Heart right ventricle (tissue), 16 donors: ENCODE measurements at regions of chr11 and their contacts with region 1.

Region 1: DNA sequence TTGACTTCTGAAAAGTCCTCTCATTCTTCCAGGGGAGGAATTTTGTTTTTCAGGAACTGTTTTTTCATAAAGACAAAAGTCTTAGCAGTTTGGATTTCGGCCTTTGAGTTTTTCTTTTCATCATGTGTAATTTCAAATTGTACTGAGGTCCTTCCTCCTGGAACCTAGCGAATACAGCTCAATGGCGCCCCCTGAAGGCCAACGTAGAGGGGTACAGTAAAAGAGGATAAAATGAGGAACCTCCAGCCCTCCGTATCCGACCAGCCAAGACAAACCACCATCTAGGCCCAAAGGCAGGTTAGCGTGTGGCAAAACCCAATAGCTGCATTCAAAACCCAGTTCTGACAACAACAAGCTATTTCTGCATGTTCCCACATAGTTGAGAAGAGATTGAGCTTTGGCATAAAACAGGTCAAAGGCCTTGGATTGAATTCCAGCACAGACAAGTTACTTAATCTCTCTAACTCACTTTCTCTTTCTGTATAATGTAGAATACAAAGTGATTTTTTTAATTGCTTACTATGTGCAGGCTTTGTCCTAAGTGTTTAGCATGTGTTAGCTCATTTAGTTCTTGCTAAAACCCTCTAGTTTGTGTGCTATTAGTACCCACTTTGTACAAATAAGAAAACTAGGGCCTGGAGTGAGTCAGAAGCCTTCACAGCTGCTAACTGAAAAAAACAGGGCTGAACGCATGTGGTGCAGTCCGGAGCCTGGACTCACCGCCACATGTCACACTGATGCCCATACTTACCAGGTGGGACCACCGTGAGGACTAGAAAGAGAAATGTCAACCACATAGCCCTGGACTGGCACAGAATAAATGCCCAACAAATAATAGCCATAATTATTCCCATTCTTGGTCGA is 43.2 kb upstream of the ETS1 start:
- DNase-seq: peak; percentile 91
- ATAC-seq: peak; percentile 84 to 93 (median 90)
- H3K4me3 ChIP-seq: peak overlapping the region in 1 of 10 donors; percentile 15
- H3K27ac ChIP-seq: peak overlapping the region in 4 of 10 donors; percentile 26 to 82 (median 44)
- H3K4me1 ChIP-seq: peaks cover 0 to 51% (median 15%) of the 10 kb centered on the region in 9 donors
- H3K27me3 ChIP-seq: no peaks in the 10 kb centered on the region
- CTCF ChIP-seq: peak; percentile 76 to 94 (median 89)

Region 2: DNA sequence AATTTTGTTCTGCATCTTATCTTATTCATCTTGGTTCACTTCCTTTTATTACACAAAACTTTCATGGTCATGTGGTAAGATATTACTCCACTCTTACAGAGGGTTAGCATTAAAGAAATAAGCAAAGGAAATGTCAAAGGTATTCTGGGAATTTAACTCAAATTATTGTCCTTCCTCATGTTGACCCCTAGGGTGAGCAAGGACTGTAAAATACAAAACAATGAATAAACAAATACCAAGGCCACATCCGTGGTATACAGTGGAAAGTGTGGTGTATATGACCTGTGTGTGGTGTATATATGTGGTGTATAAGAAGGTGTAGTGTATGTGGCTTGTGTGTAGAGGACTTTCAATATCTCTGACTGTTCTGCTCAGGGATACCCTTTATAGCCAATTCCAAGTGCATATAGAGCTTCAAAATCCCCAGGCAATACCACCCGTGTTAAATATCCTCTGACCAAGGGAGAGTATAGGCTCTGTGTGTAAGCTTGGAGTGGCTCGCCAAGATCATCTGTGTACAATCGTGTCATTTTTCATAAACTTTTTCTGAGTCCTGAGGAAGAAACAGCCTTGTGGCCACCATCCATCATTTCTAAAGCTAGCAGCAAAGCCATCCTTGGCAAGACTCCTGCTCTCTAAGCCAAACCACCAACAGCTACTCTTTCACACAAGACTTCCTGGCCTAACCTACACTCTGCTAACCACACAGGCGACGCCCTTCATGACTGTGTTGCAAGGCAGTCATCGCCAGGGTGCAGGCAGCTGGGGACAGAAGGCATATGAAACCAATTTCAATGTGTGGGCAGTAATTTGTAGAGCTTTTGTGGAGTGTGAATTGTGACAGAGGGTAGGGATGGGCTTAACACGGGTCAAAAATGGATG is 591.2 kb before region 1 on chr11:
- intact Hi-C with region 1: loop called in 1 of 10 experiments (anchors 5 kb)
- DNase-seq: peak; percentile 4 to 21
- ATAC-seq: peak in 7 of 8 donors; percentile 33 to 79 (median 58)
- H3K4me3 ChIP-seq: no peak overlapping the region
- H3K27ac ChIP-seq: peak overlapping the region in 1 of 10 donors; percentile 78
- H3K4me1 ChIP-seq: peaks cover 0 to 36% (median 0%) of the 10 kb centered on the region in 9 donors
- H3K27me3 ChIP-seq: peaks cover 0 to 11% (median 0%) of the 10 kb centered on the region in 7 donors
- CTCF ChIP-seq: no peak

Region 3: DNA sequence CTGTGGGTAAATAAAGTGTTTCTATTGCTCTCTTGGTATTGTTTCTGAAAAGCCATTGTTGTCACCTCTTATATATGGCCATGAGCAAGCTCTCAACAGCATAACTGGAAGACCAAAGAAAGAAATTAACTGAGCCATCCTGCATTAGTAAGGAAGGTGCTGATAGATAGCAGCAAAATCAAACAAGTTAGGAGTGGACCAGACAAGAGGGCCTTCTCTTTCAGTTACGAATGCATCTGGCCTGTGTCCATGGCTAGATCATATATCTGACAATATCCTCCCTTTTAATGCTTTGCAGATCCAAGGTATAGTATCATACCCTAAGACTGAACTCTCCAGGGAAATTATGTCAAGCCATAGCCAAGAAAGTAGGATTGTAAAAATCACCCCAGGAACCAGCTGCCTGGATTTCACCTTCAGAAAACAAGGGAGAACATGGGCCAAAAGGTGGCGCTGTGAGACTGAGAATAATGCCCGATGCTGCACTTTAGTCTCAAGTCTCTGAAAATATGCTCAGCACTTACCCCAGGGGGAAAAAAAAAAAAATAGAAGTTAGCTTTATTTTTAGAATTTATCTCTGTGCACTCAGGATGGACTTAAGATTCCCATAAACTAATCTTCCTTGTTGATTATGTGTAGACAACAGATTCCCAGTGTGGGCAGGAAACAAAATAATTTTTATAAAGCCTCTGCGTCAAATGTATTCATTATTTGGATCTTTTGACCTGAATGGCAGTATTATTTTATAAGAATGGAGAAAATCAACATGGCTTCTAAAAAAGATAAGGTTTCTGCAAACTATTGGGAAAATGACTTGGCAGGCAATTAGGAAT is 458.3 kb before region 1 on chr11:
- intact Hi-C with region 1: loop called (anchors 1 to 5 kb)
- DNase-seq: peak; percentile 73 to 87
- ATAC-seq: peak in 7 of 8 donors; percentile 77 to 92 (median 87)
- H3K4me3 ChIP-seq: no peak overlapping the region
- H3K27ac ChIP-seq: peak overlapping the region in 1 of 10 donors; percentile 16
- H3K4me1 ChIP-seq: peaks cover 0 to 13% (median 0%) of the 10 kb centered on the region in 9 donors
- H3K27me3 ChIP-seq: peaks cover 0 to 5% (median 0%) of the 10 kb centered on the region in 7 donors
- CTCF ChIP-seq: peak; percentile 59 to 89 (median 82)

Region 4: DNA sequence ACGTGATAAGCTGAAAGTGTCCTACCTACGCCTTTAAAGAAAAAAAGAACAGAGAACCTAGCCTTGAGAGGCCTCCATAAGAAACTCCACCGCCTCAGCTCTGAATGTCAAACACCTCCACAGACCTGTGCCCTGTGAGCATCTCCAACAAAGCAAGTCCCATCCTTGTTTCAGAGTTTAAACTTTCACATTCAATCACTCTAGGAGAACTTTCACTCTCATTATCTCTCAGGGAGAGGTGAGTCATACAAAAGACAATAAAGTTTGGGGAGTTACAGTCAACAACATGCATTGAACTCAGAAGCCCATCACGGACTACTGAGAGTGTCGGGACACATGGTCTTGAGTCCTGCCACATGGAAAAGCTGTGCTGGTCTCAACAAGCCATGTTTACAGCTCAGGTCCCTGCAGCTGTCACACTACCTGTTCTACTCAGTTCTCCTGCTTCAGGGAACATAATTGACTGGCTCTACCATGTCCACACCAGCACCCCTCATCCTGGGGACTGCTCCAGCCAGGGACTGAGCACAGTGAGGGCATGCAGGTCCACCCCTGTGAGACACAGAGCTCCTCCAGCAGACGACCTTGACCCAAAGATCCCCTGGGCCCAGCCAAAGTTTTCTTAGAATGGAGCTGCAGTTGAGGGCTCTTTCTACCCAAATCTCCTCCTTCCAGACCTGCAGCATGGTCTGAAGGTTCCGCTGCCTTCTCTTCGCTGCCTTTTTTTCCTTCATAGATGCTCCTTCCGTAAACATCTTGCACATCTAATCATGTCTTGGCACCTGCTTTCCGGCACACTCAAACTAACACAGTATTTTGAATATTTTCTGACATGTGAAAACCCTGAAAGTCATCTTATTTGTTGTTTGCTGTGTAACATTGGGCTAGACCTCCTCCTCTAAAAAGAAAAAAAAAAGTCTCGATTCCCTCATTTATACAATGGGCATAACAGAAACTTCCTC is 158.2 kb before region 1 on chr11:
- intact Hi-C with region 1: loop called in 1 of 10 experiments (anchors 5 kb)
- DNase-seq: no peak
- ATAC-seq: no peak
- H3K4me3 ChIP-seq: no peak overlapping the region
- H3K27ac ChIP-seq: peak overlapping the region in 7 of 10 donors; percentile 35 to 84 (median 50)
- H3K4me1 ChIP-seq: peaks cover 30 to 100% (median 96%) of the 10 kb centered on the region in 9 donors
- H3K27me3 ChIP-seq: no peaks in the 10 kb centered on the region
- CTCF ChIP-seq: no peak

Region 5: DNA sequence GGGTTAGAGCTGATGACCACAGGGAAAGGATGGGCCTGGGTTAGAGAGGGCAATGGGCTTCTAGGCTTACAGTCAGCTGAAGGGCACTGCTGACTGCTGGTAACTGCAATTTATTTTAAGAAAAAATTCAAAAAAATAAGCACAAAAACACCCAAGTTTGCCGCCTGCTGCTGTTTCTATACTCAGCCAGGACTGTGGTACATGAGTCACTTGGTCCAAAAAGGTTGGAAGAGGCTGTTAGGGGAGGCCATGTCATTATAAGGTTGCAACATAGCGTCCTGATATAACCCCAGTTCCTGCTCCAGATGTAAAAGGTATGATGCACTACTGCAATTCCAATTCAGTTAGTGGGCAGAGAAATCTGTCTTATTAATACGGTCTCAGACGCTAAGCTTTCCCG is 142.1 kb before region 1 on chr11:
- intact Hi-C with region 1: loop called in 2 of 10 experiments (anchors 5 kb)
- DNase-seq: no peak
- ATAC-seq: peak in 6 of 8 donors; percentile 56 to 95 (median 69)
- H3K4me3 ChIP-seq: no peak overlapping the region
- H3K27ac ChIP-seq: peak overlapping the region in 9 of 10 donors; percentile 17 to 74 (median 57)
- H3K4me1 ChIP-seq: peaks cover 6 to 98% (median 84%) of the 10 kb centered on the region in 9 donors
- H3K27me3 ChIP-seq: no peaks in the 10 kb centered on the region
- CTCF ChIP-seq: no peak

Region 6: DNA sequence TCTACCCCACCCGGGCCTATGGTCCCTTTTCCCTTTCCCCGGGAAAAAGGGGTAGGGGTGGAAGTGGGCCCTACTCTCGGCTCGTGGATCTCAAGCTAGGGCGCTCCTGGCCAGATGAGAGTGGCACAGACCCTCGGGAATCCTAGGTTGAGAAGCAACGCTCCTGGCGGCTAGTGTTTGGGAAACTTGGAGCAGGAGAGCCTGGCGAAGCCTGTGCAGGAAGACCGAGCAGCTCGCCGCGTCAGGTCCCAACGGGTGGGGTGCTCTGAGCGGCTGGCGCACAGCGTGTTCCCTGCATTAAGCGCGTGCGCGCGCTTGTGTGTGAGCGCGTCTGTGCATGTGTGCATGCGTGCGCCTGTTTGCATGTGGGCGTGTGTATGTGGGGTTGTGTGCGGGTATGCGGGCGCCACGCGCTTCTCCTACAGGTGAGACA is 56.2 kb after region 1 on chr11:
- intact Hi-C with region 1: no loop called
- DNase-seq: peak in 1 of 2 donors; percentile 65
- ATAC-seq: peak in 7 of 8 donors; percentile 57 to 80 (median 71)
- H3K4me3 ChIP-seq: peak overlapping the region; percentile 4 to 56 (median 53)
- H3K27ac ChIP-seq: no peak overlapping the region
- H3K4me1 ChIP-seq: peaks cover 15 to 66% (median 55%) of the 10 kb centered on the region in 9 donors
- H3K27me3 ChIP-seq: peaks cover 16 to 67% (median 57%) of the 10 kb centered on the region in 7 donors
- CTCF ChIP-seq: no peak

Region 7: DNA sequence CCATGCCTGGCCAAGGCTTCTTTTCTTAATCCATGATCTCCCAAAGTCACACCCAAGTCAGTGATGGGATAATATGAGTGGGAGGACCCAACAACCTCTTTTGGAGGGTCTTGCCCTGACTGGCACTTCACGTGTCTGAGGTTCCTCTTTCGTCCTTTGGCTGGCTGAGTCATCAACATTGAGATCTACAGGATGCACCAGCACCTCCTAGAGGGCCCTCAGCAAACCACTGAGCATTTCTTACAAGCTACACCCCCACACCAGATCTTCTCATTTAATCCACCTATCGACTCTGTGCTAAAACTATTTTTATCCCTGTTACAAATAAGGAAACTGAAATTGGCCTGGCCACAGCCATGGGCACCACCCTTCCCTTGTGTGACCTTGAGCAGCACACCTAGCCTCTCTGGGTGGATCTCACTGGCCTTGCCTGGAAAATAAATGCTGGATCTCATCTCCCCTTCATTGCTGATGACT is 126.7 kb after region 1 on chr11:
- intact Hi-C with region 1: loop called in 1 of 10 experiments (anchors 10 kb)
- DNase-seq: peak in 1 of 2 donors; percentile 49
- ATAC-seq: peak; percentile 61 to 85 (median 72)
- H3K4me3 ChIP-seq: no peak overlapping the region
- H3K27ac ChIP-seq: peak overlapping the region in 1 of 10 donors; percentile 10
- H3K4me1 ChIP-seq: peaks cover 0 to 50% (median 17%) of the 10 kb centered on the region in 9 donors
- H3K27me3 ChIP-seq: no peaks in the 10 kb centered on the region
- CTCF ChIP-seq: peak in 8 of 9 donors; percentile 20 to 73 (median 40)

Region 8: GRCh38 chr11:128831174-128832120 is 200.8 kb after region 1 on chr11:
- intact Hi-C with region 1: loop called (anchors 2 to 10 kb)
- DNase-seq: peak; percentile 81 to 85
- ATAC-seq: peak; percentile 69 to 84 (median 77)
- H3K4me3 ChIP-seq: peak overlapping the region in 4 of 10 donors; percentile 11 to 40 (median 32)
- H3K27ac ChIP-seq: peak overlapping the region in 4 of 10 donors; percentile 28 to 62 (median 46)
- H3K4me1 ChIP-seq: peaks cover 0 to 55% (median 27%) of the 10 kb centered on the region in 9 donors
- H3K27me3 ChIP-seq: no peaks in the 10 kb centered on the region
- CTCF ChIP-seq: peak; percentile 88 to 93 (median 91)